ENCODE measurements at regions of chr15 and their contacts with region 1.

Region 1: GRCh38 chr15:73704869-73705645 is 20.9 kb downstream of the CD276 start:
- DNase-seq: peak; percentile 66
- H3K4me3 Mint-ChIP-seq: no peak overlapping the region
- H3K27ac Mint-ChIP-seq: peak overlapping the region; percentile 29
- H3K4me1 Mint-ChIP-seq: peaks cover 5% of the 10 kb centered on the region
- H3K27me3 Mint-ChIP-seq: no peaks in the 10 kb centered on the region
- CTCF ChIP-seq: peak; percentile 69

Region 2: DNA sequence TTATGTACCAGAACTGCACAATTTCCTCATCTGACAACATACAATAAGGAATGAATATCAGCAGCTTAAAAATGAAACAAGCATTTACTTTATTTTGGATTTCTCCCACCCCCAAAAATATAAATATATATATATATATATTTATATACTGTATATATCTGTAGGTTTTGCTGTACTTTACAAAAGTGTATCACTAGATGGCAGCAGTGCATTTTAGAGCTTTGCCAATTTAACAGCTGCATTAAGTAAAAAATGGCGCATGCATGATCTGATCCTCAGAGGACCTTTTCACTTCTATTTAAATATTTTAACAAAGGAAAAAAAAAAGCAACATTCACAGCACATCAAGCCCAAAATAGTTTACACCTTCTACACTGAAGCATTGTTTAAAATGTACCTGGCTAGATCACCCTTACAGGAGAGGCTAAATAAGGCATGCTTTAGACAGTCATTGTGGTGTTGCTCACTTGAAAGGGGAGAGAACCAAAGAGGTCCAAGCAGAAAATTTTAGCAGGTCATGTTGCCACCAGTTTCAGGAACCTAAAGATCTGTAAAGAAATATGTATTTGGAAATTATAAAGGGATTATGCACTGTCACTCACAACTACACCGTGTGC is 144.4 kb before region 1 on chr15:
- CTCF ChIA-PET with region 1: interaction called, 55 read pairs
- POLR2A ChIA-PET with region 1: interaction called, 13 read pairs
- intact Hi-C with region 1: loop called (anchors 1 kb)
- DNase-seq: peak; percentile 72
- H3K4me3 Mint-ChIP-seq: no peak overlapping the region
- H3K27ac Mint-ChIP-seq: no peak overlapping the region
- H3K4me1 Mint-ChIP-seq: peaks cover 7% of the 10 kb centered on the region
- H3K27me3 Mint-ChIP-seq: no peaks in the 10 kb centered on the region
- CTCF ChIP-seq: peak; percentile 51

Region 3: DNA sequence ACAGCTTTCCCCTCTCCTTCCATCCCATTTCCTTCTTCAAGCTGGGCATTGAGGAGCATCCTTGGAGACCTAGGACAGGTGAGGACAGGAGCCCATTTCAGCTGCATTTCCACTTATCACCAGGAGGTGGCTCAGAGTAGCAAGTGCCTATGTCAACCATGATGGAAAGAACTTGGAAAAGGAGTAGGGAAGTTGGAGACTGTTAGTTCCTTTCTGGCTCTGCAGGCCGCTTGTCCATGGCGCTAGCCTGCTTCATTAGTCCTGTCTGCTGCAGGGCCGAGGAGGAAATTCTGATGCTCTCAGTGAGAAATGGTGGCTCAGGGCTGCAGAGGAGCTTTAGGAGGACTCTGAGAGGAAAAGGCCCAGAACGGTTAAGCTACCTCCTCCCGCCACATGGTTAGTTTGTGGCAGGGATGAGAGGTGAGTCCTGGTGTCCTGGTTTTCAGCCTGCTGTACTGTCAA is 27.9 kb before region 1 on chr15:
- CTCF ChIA-PET with region 1: interaction called, 98 read pairs
- POLR2A ChIA-PET with region 1: interaction called, 3 read pairs
- intact Hi-C with region 1: loop called (anchors 1 kb)
- DNase-seq: peak; percentile 80
- H3K4me3 Mint-ChIP-seq: no peak overlapping the region
- H3K27ac Mint-ChIP-seq: no peak overlapping the region
- H3K4me1 Mint-ChIP-seq: peaks cover 2% of the 10 kb centered on the region
- H3K27me3 Mint-ChIP-seq: no peaks in the 10 kb centered on the region
- CTCF ChIP-seq: peak; percentile 81

Region 4: DNA sequence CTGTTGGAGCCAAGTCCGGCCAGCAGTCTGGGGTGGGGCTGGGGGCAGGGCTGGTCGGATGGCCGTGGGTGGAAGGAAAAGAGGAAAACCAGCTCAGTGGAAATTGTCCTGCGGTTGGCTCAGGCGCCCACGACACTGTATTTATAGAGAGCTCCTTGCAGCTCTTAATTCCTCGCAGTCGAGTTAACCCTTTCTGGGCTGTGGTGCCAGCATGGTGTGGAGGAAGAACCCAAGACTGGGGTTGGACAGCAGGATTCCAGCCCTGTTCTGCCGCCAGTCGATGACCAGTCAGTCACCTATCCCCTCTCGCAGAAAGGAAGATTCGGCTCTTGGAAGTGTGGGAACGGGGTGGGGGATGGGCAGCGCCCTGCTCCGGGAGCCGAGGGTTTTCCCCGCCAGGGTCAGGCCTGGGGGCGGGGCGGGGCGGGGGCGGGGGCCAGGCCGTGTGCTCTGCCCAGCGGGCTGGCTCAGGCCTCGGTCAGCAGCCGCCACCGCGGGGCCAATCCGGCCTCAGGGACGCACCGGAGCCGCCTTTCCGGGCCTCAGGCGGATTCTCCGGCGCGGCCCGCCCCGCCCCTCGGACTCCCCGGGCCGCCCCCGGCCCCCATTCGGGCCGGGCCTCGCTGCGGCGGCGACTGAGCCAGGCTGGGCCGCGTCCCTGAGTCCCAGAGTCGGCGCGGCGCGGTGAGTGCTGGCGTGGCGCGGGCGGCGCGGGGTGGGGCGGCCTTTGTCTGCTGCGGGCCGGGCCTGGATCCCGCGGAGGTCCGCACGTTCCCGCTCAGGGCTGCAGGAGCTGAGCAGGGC is 21.1 kb before region 1 on chr15 and contains the start of gene CD276:
- CTCF ChIA-PET with region 1: interaction called, 98 read pairs
- POLR2A ChIA-PET with region 1: interaction called, 5 read pairs
- intact Hi-C with region 1: no loop called
- DNase-seq: peak; percentile 64
- H3K4me3 Mint-ChIP-seq: peak within 1 kb of the TSS; percentile 82
- H3K27ac Mint-ChIP-seq: peak within 1 kb of the TSS; percentile 69
- H3K4me1 Mint-ChIP-seq: peaks cover 41% of the 10 kb centered on the region
- H3K27me3 Mint-ChIP-seq: no peaks in the 10 kb centered on the region
- CTCF ChIP-seq: no peak
- total RNA-seq, gene CD276: 52.8 and 57.7 TPM in 2 replicates

Region 5: DNA sequence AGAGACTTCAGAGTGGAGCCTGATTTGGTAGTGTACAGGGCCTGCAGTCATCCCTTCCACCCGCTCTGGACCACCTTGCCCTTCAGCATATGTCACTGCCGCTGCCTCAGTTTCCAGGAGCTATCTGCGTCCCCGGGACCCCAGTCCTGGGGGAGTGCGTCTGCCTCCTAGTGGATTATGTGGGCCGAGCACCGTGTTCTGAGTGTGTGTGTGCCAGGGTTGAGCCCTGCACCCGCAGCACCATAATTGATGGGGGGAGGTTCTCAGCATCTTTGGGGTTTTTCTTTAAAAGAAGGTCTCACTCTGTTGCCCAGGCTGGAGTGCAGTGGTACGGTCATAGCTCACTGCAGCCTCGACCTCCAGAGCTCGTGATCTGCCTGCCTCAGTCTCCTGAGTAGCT is 12.7 kb after region 1 on chr15:
- CTCF ChIA-PET with region 1: interaction called, 20 read pairs
- POLR2A ChIA-PET with region 1: no interaction called
- intact Hi-C with region 1: no loop called
- DNase-seq: no peak
- H3K4me3 Mint-ChIP-seq: no peak overlapping the region
- H3K27ac Mint-ChIP-seq: no peak overlapping the region
- H3K4me1 Mint-ChIP-seq: no peaks in the 10 kb centered on the region
- H3K27me3 Mint-ChIP-seq: no peaks in the 10 kb centered on the region
- CTCF ChIP-seq: no peak

Region 6: GRCh38 chr15:73894133-73894814 is 189.2 kb after region 1 on chr15:
- CTCF ChIA-PET with region 1: no interaction called
- POLR2A ChIA-PET with region 1: no interaction called
- intact Hi-C with region 1: no loop called
- DNase-seq: no peak
- H3K4me3 Mint-ChIP-seq: no peak overlapping the region
- H3K27ac Mint-ChIP-seq: no peak overlapping the region
- H3K4me1 Mint-ChIP-seq: no peaks in the 10 kb centered on the region
- H3K27me3 Mint-ChIP-seq: peaks cover 16% of the 10 kb centered on the region
- CTCF ChIP-seq: no peak

Measured in MCF 10A (cell line).